ENCODE measurements at regions of chr10 and their contacts with region 1.

Region 1: GRCh38 chr10:68742397-68742796 is 21.4 kb downstream of the CCAR1 start:
- DNase-seq: no peak
- ATAC-seq: no peak
- H3K4me3 ChIP-seq: no peak overlapping the region
- H3K27ac ChIP-seq: no peak overlapping the region
- H3K4me1 ChIP-seq: no peaks in the 10 kb centered on the region
- H3K27me3 ChIP-seq: no peaks in the 10 kb centered on the region
- CTCF ChIP-seq: no peak
- POLR2A ChIP-seq: no peak
- RAD21 ChIP-seq: no peak

Region 2: DNA sequence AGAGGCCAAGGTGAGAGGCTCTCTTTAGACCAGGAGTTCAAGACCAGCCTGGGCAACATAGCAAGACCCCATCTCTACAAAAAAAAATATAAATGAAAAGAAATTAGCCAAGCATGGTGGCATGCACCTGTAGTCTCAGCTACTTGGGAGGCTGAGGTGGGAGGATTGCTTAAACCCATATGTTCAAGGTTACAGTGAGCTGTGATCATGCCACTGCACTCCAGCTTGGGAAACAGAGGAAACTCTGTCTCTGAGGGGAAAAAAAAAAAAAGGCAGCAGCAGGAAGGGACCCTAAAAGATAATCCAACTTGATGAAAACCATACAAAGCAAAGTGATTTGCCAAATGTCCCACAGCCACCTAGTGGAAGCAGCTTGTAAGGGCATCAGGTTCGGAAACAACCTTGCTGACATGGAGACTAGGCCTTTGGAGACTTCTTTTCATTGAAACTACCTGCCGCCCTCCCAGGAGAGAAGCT is 394.1 kb before region 1 on chr10:
- CTCF ChIA-PET with region 1: no interaction called
- POLR2A ChIA-PET with region 1: no interaction called
- dilution Hi-C with region 1: no loop called
- in situ Hi-C with region 1: no loop called
- intact Hi-C with region 1: loop called (anchors 10 kb)
- DNase-seq: peak; percentile 65
- ATAC-seq: peak; percentile 78
- H3K4me3 ChIP-seq: no peak overlapping the region
- H3K27ac ChIP-seq: no peak overlapping the region
- H3K4me1 ChIP-seq: no peaks in the 10 kb centered on the region
- H3K27me3 ChIP-seq: no peaks in the 10 kb centered on the region
- CTCF ChIP-seq: peak; percentile 61
- POLR2A ChIP-seq: no peak
- RAD21 ChIP-seq: peak; percentile 57

Region 3: GRCh38 chr10:68385740-68386139 is 356.7 kb before region 1 on chr10:
- CTCF ChIA-PET with region 1: no interaction called
- POLR2A ChIA-PET with region 1: interaction called, 12 read pairs
- dilution Hi-C with region 1: no loop called
- in situ Hi-C with region 1: no loop called
- intact Hi-C with region 1: no loop called
- DNase-seq: no peak
- ATAC-seq: no peak
- H3K4me3 ChIP-seq: no peak overlapping the region
- H3K27ac ChIP-seq: no peak overlapping the region
- H3K4me1 ChIP-seq: no peaks in the 10 kb centered on the region
- H3K27me3 ChIP-seq: no peaks in the 10 kb centered on the region
- CTCF ChIP-seq: no peak
- POLR2A ChIP-seq: no peak
- RAD21 ChIP-seq: no peak

Region 4: GRCh38 chr10:68784476-68784875 is 42.1 kb after region 1 on chr10:
- CTCF ChIA-PET with region 1: no interaction called
- POLR2A ChIA-PET with region 1: no interaction called
- dilution Hi-C with region 1: no loop called
- in situ Hi-C with region 1: no loop called
- intact Hi-C with region 1: loop called (anchors 5 kb)
- DNase-seq: peak; percentile 8
- ATAC-seq: no peak; the same call in 1 of the 2 replicates
- H3K4me3 ChIP-seq: no peak overlapping the region
- H3K27ac ChIP-seq: no peak overlapping the region
- H3K4me1 ChIP-seq: no peaks in the 10 kb centered on the region
- H3K27me3 ChIP-seq: no peaks in the 10 kb centered on the region
- CTCF ChIP-seq: no peak
- POLR2A ChIP-seq: no peak
- RAD21 ChIP-seq: no peak

Region 5: DNA sequence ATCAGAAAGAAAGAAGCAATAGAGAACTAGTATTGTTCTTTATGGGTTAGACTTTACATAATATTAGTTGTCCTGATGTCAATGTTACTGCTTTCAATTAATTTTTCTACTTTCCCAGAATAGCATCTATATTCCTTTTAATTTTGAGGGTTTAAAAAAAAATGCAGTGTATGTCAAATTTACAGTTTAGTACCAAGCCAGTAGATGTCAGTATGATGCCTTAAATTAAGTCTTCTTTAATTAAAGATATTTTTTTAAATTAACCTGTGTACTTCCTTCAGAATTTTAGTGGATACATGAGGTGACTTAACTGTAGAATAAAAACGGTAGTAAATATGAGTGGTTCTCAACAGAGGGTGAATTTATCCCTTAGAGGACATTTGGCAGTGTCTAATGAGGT is 49.7 kb after region 1 on chr10:
- CTCF ChIA-PET with region 1: no interaction called
- POLR2A ChIA-PET with region 1: no interaction called
- dilution Hi-C with region 1: no loop called
- in situ Hi-C with region 1: no loop called
- intact Hi-C with region 1: loop called (anchors 5 kb)
- DNase-seq: peak; percentile 30
- ATAC-seq: no peak
- H3K4me3 ChIP-seq: no peak overlapping the region
- H3K27ac ChIP-seq: no peak overlapping the region
- H3K4me1 ChIP-seq: no peaks in the 10 kb centered on the region
- H3K27me3 ChIP-seq: no peaks in the 10 kb centered on the region
- CTCF ChIP-seq: peak; percentile 39
- POLR2A ChIP-seq: no peak
- RAD21 ChIP-seq: peak; percentile 41